BJ (cell line): ENCODE measurements at regions of chr2 and their contacts with region 1.

Region 1: DNA sequence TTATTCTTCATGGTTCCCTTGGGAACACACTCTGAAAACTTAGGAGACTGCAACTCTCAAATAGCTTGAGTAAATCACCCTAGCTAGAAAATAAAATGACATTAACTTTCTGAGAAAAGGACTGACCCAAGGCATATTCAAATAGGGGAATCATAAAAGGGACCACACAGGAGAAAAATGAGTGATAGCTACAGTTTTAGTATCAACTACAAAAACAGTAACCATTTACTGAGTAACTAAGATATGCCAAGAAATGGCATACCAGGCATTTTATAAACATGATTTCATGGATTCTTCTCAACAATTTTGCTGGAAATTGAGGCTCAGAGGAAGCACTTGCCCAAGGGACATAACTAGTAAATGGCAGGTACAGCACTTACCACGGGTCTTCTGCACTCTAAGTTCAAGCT is 84.5 kb downstream of the AFF3 start:
- DNase-seq: peak; percentile 41
- H3K4me3 ChIP-seq: no peak overlapping the region
- H3K27me3 ChIP-seq: no peaks in the 10 kb centered on the region
- CTCF ChIP-seq: no peak

Region 2: DNA sequence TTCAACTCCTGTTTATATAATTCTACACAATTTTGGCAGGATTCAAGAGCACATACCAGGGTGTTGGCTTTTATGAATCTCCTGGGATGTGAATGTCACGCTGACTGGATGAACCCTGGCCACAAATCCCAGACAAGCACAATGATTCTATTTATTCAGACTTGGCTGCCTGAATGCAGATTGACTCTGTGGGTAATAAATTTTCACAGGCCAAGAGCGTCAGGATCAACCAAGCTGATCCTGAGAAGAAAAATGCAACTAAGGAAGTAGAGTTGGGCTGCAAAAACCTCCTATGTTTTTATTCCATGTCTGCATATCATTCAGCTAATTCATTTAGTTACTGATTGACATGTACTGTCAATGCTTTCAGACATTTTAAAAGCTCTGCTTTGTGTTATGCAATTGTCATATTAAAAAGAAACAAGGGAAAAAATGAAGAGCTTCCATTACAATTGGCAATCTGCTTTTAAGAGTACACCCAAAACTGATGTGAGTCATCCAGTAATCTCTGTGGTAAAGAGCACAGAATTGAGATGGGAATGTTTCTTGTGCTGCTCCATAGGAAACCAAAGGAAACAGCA is 395.1 kb before region 1 on chr2:
- CTCF ChIA-PET with region 1: no interaction called
- POLR2A ChIA-PET with region 1: interaction called, 11 read pairs
- DNase-seq: peak; percentile 99
- H3K4me3 ChIP-seq: no peak overlapping the region
- H3K27me3 ChIP-seq: no peaks in the 10 kb centered on the region
- CTCF ChIP-seq: no peak